ENCODE measurements at regions of chr6 and their contacts with region 1.

Region 1: GRCh38 chr6:88870717-88871330 is 92.6 kb downstream of the RNGTT start:
- DNase-seq: peak in 7 of 9 donors; percentile 12 to 54 (median 47)
- ATAC-seq: peak; percentile 60
- H3K4me3 ChIP-seq: no peak overlapping the region
- H3K4me3 Mint-ChIP-seq: no peak overlapping the region
- H3K27ac ChIP-seq: no peak overlapping the region
- H3K27ac Mint-ChIP-seq: no peak overlapping the region
- H3K4me1 ChIP-seq: no peaks in the 10 kb centered on the region
- H3K4me1 Mint-ChIP-seq: peaks cover 15 to 46% (median 29%) of the 10 kb centered on the region in 7 donors
- H3K27me3 ChIP-seq: no peaks in the 10 kb centered on the region
- H3K27me3 Mint-ChIP-seq: no peaks in the 10 kb centered on the region

Region 2: GRCh38 chr6:87066449-87067333 is 1804.1 kb before region 1 on chr6:
- CTCF ChIA-PET with region 1: no interaction called
- POLR2A ChIA-PET with region 1: no interaction called
- intact Hi-C with region 1: loop called in 1 of 2 experiments (anchors 1 kb)
- DNase-seq: peak in 5 of 9 donors; percentile 7 to 39 (median 16)
- ATAC-seq: no peak
- H3K4me3 ChIP-seq: no peak overlapping the region
- H3K4me3 Mint-ChIP-seq: peak overlapping the region in 2 of 10 donors; percentile 17 to 20
- H3K27ac ChIP-seq: no peak overlapping the region
- H3K27ac Mint-ChIP-seq: no peak overlapping the region
- H3K4me1 ChIP-seq: no peaks in the 10 kb centered on the region
- H3K4me1 Mint-ChIP-seq: peaks cover 0 to 6% (median 0%) of the 10 kb centered on the region in 7 donors
- H3K27me3 ChIP-seq: peaks cover 0 to 5% of the 10 kb centered on the region in 2 donors
- H3K27me3 Mint-ChIP-seq: peaks cover 11 to 38% (median 18%) of the 10 kb centered on the region in 5 donors

Region 3: GRCh38 chr6:87832025-87832825 is 1038.6 kb before region 1 on chr6:
- CTCF ChIA-PET with region 1: interaction called, 9 read pairs
- POLR2A ChIA-PET with region 1: no interaction called
- intact Hi-C with region 1: loop called (anchors 1 kb)
- DNase-seq: peak in 6 of 9 donors; percentile 12 to 50 (median 29)
- ATAC-seq: peak; percentile 81
- H3K4me3 ChIP-seq: peak overlapping the region; percentile 64
- H3K4me3 Mint-ChIP-seq: peak overlapping the region; percentile 69 to 97 (median 89)
- H3K27ac ChIP-seq: peak overlapping the region; percentile 56
- H3K27ac Mint-ChIP-seq: peak overlapping the region; percentile 75 to 95 (median 88)
- H3K4me1 ChIP-seq: no peaks in the 10 kb centered on the region
- H3K4me1 Mint-ChIP-seq: peaks cover 0 to 15% (median 8%) of the 10 kb centered on the region in 7 donors
- H3K27me3 ChIP-seq: no peaks in the 10 kb centered on the region
- H3K27me3 Mint-ChIP-seq: peaks cover 0 to 12% (median 4%) of the 10 kb centered on the region in 5 donors

Region 4: DNA sequence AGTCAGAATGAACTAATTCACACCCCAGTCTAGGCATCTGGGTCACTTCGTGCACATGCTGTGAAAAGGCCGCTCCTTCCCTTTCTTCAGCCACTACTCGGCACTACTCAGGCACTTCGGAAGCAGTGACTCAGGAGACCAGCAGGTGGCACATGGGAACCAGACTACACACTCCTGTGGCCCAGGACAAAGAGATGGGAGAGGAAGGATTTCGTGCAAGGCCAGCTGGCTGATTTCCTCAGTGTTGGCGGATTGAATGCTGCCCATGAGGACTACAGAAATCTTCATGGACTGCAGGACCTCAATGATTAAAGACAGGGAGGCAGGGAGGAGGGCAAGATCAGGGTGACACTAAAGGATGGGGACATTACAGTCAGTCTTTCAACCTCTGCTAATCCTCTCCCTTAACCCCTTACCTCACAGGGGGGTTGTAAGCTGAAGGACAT is 941.0 kb before region 1 on chr6:
- CTCF ChIA-PET with region 1: interaction called, 11 read pairs
- POLR2A ChIA-PET with region 1: no interaction called
- intact Hi-C with region 1: loop called (anchors 1 kb)
- DNase-seq: peak; percentile 5 to 55 (median 43)
- ATAC-seq: peak; percentile 83
- H3K4me3 ChIP-seq: no peak overlapping the region
- H3K4me3 Mint-ChIP-seq: no peak overlapping the region
- H3K27ac ChIP-seq: no peak overlapping the region
- H3K27ac Mint-ChIP-seq: no peak overlapping the region
- H3K4me1 ChIP-seq: peaks cover 0 to 5% of the 10 kb centered on the region in 2 donors
- H3K4me1 Mint-ChIP-seq: peaks cover 0 to 3% (median 0%) of the 10 kb centered on the region in 7 donors
- H3K27me3 ChIP-seq: no peaks in the 10 kb centered on the region
- H3K27me3 Mint-ChIP-seq: peaks cover 0 to 15% (median 3%) of the 10 kb centered on the region in 5 donors

Region 5: GRCh38 chr6:88780714-88781389 is 90.0 kb before region 1 on chr6:
- CTCF ChIA-PET with region 1: no interaction called
- POLR2A ChIA-PET with region 1: no interaction called
- intact Hi-C with region 1: loop called (anchors 1 to 2 kb)
- DNase-seq: peak; percentile 8 to 64 (median 53)
- ATAC-seq: peak; percentile 92
- H3K4me3 ChIP-seq: no peak overlapping the region
- H3K4me3 Mint-ChIP-seq: no peak overlapping the region
- H3K27ac ChIP-seq: no peak overlapping the region
- H3K27ac Mint-ChIP-seq: no peak overlapping the region
- H3K4me1 ChIP-seq: no peaks in the 10 kb centered on the region
- H3K4me1 Mint-ChIP-seq: peaks cover 0 to 10% (median 3%) of the 10 kb centered on the region in 7 donors
- H3K27me3 ChIP-seq: no peaks in the 10 kb centered on the region
- H3K27me3 Mint-ChIP-seq: no peaks in the 10 kb centered on the region

Region 6: GRCh38 chr6:88855541-88856147 is 15.2 kb before region 1 on chr6:
- CTCF ChIA-PET with region 1: interaction called, 3 read pairs
- POLR2A ChIA-PET with region 1: no interaction called
- intact Hi-C with region 1: loop called in 1 of 2 experiments (anchors 2 kb)
- DNase-seq: no peak
- ATAC-seq: no peak
- H3K4me3 ChIP-seq: no peak overlapping the region
- H3K4me3 Mint-ChIP-seq: no peak overlapping the region
- H3K27ac ChIP-seq: no peak overlapping the region
- H3K27ac Mint-ChIP-seq: no peak overlapping the region
- H3K4me1 ChIP-seq: no peaks in the 10 kb centered on the region
- H3K4me1 Mint-ChIP-seq: peaks cover 0 to 7% (median 4%) of the 10 kb centered on the region in 7 donors
- H3K27me3 ChIP-seq: no peaks in the 10 kb centered on the region
- H3K27me3 Mint-ChIP-seq: no peaks in the 10 kb centered on the region

Region 7: DNA sequence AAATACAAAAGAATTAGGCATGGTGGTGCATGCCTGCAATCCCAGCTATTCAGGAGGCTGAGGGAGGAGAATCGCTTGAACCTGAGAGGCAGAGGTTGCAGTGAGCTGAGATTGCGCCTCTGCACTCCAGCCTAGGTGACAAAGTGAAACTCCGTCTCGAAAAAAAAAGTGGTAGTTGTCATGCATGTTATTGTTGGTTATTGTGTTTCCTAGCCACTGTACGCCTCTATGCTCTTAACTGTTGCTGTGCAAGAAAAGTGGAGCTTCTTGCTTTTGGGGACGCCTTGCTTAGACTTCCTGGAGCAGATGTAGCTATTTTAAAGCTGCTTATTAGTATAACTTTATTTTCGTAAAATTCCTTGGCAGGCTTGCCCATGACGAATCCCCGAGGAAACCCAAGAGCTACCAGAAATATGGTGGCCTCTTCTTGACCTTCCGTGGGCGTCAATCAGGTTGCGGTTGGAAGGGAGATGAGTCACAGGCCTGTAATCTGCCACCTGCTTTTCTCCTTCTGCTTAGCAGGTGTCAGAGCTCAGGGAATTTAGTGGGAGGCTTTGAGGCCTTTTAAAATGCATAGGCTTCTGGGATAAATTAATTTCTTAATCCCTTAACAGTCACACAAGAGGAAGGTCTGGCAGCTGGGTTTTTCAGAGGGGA is 427.0 kb after region 1 on chr6:
- CTCF ChIA-PET with region 1: no interaction called
- POLR2A ChIA-PET with region 1: no interaction called
- intact Hi-C with region 1: no loop called
- DNase-seq: peak in 4 of 9 donors; percentile 19 to 72 (median 24)
- ATAC-seq: peak; percentile 78
- H3K4me3 ChIP-seq: no peak overlapping the region
- H3K4me3 Mint-ChIP-seq: peak overlapping the region in 9 of 10 donors; percentile 12 to 69 (median 34)
- H3K27ac ChIP-seq: no peak overlapping the region
- H3K27ac Mint-ChIP-seq: peak overlapping the region; percentile 15 to 95 (median 63)
- H3K4me1 ChIP-seq: peaks cover 16 to 17% of the 10 kb centered on the region in 2 donors
- H3K4me1 Mint-ChIP-seq: peaks cover 13 to 22% (median 18%) of the 10 kb centered on the region in 7 donors
- H3K27me3 ChIP-seq: no peaks in the 10 kb centered on the region
- H3K27me3 Mint-ChIP-seq: no peaks in the 10 kb centered on the region

Measured in naive thymus-derived CD4-positive, alpha-beta T cell (primary cell).